Adrenal gland (tissue), 19 donors: ENCODE measurements at regions of chr4 and their contacts with region 1.

Region 1: GRCh38 chr4:87838890-87839591 is 6.3 kb downstream of the MEPE start:
- DNase-seq: peak in 5 of 7 donors; percentile 38 to 71 (median 53)
- H3K4me3 ChIP-seq: no peak overlapping the region
- H3K27ac ChIP-seq: no peak overlapping the region
- H3K4me1 ChIP-seq: no peaks in the 10 kb centered on the region
- H3K27me3 ChIP-seq: no peaks in the 10 kb centered on the region
- CTCF ChIP-seq: peak; percentile 65 to 77 (median 71)
- POLR2A ChIP-seq: no peak

Region 2: DNA sequence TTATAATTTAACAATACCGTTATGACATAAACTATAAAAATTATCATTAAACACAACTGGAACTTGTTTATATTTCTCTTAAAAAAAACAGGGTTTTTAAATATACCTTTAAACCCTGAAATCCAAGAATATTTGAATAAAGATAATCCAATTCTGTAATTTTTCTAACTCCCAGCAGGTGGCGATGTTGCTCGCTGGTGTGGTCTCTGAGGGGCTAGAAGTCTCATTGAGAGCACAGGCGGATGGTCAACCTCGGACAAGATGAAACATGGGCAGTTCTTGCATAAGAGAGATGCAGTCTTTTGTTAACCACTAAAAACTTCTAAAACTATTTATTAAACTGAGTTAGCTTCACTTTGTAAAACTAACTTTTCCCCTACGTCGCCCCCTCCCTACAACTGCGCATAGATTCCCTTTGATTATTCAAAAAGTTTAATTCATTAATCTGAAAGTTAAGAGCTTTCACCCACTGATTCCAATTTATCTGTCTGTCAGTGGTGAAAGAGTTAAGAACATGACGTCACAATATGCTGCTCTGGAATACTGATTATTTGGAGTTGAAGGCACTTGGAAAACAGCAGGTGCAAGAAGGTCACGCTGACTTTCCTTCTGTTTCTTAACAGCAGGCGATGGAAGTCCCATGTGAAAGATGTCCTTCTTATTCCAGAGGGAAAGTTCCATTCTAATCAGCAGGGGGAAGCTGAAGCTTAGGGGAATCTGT is 159.4 kb before region 1 on chr4:
- intact Hi-C with region 1: loop called (anchors 5 kb)
- DNase-seq: peak; percentile 21 to 54 (median 35)
- H3K4me3 ChIP-seq: no peak overlapping the region
- H3K27ac ChIP-seq: no peak overlapping the region
- H3K4me1 ChIP-seq: peaks cover 0 to 4% of the 10 kb centered on the region in 2 donors
- H3K27me3 ChIP-seq: no peaks in the 10 kb centered on the region
- CTCF ChIP-seq: peak; percentile 61 to 82 (median 78)
- POLR2A ChIP-seq: no peak